SK-N-SH (cell line): ENCODE measurements at regions of chr1 and their contacts with region 1.

Region 1: GRCh38 chr1:19651141-19651737 is 7.1 kb downstream of the NBL1 start:
- DNase-seq: peak; percentile 90
- H3K4me3 ChIP-seq: peak overlapping the region in 1 of 2 experiments; percentile 39; a peak in 1 of 4 replicates
- H3K27ac ChIP-seq: peak overlapping the region in 1 of 2 experiments; percentile 54; a peak in 2 of 4 replicates
- H3K4me1 ChIP-seq: peaks cover 0 to 35% of the 10 kb centered on the region in 2 experiments; a peak in 1 of 4 replicates
- H3K27me3 ChIP-seq: no peaks in the 10 kb centered on the region
- CTCF ChIP-seq: peak; percentile 69
- EP300 ChIP-seq: no peak
- RAD21 ChIP-seq: peak; percentile 92

Region 2: DNA sequence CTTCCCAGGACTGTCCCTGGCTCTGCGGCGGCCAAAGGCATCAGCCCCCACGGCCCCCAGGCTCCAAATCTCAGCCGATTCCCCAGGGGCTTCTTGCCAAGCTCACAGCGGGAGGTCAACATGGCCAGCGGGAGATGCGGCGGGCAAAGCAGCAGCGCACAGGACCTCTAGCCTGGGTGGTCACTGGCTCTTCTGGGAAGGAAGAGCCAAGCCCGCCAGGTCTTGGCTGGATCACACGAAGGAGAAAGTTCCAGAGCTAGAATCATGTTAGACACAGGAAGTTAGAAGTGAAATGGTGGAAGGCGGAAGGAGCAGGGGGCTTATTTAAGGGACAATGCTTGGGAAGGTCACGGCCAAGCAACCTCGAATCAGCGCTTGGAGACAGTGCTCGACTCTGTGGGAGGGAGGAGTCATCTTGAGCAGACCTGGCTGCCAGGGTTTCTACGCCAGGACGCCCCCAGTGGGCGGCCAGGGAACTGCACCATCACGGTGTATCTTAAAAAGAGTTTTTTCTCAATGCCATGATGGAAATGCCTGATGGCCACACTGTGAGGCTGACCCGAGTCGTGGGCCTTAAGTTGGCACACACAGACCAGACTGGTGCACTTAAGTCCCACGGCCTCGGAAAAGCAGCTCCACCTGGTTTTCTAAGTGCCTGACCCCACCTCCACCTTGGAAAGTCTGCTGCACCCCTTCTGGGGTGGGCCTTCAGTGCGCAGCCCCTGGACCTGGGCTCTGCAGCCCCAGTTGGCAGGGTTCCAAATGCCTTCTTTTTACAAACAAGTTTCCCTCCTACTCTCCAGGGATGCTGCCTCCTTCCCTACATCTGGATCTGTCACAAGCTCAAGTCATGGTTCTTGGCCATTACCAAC is 309.8 kb before region 1 on chr1:
- CTCF ChIA-PET with region 1: interaction called, 235 read pairs
- POLR2A ChIA-PET with region 1: no interaction called
- DNase-seq: peak; percentile 89
- H3K4me3 ChIP-seq: no peak overlapping the region; a peak in 1 of 4 replicates
- H3K27ac ChIP-seq: peak overlapping the region in 1 of 2 experiments; percentile 85; a peak in 2 of 4 replicates
- H3K4me1 ChIP-seq: peaks cover 0 to 70% of the 10 kb centered on the region in 2 experiments; a peak in 2 of 4 replicates
- H3K27me3 ChIP-seq: no peaks in the 10 kb centered on the region
- CTCF ChIP-seq: peak; percentile 87
- EP300 ChIP-seq: no peak
- RAD21 ChIP-seq: peak; percentile 57

Region 3: DNA sequence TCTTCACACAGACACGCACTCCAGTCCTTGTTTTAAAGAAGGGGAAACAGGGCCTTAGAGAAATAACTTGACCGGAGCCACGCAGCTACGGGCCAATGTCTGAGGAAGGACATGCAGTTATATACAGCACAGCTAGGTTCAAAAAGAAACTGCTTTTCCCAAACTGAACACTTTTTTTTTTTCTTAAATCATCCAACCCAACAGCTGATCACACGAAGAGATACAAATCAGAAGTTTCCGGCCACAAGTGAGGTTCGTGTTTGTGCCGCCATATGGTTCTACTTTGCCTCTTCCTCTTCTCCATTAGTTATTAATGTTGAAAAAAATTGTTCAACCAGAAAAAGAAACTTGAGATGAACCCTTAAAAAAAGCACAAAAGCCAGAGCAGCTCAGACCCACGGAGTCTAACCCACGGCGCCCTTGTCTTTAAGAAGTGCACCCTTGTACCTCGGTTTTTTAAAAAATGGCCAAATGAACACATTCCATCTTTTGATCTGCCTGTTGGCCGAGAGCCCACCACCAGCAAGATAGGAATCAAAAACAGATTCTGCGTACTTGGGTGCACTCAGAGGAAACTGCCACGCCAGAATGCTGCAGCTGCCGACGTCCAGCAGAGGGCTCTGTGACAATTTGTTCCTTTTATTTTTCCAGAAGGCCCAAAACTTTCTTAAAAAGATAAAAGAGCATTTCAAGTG is 260.2 kb before region 1 on chr1:
- CTCF ChIA-PET with region 1: interaction called, 33 read pairs
- POLR2A ChIA-PET with region 1: no interaction called
- DNase-seq: peak; percentile 85
- H3K4me3 ChIP-seq: peak overlapping the region; percentile 33 to 56
- H3K27ac ChIP-seq: peak overlapping the region; percentile 80 to 97
- H3K4me1 ChIP-seq: peaks cover 37 to 70% of the 10 kb centered on the region in 2 experiments
- H3K27me3 ChIP-seq: no peaks in the 10 kb centered on the region
- CTCF ChIP-seq: peak; percentile 98
- EP300 ChIP-seq: peak; percentile 76 to 84
- RAD21 ChIP-seq: peak; percentile 77

Region 4: GRCh38 chr1:19448491-19449439 is 202.5 kb before region 1 on chr1:
- CTCF ChIA-PET with region 1: interaction called, 50 read pairs
- POLR2A ChIA-PET with region 1: interaction called, 3 read pairs
- DNase-seq: peak; percentile 89
- H3K4me3 ChIP-seq: peak overlapping the region; percentile 22 to 48
- H3K27ac ChIP-seq: peak overlapping the region; percentile 96 to 99
- H3K4me1 ChIP-seq: peaks cover 55 to 82% of the 10 kb centered on the region in 2 experiments
- H3K27me3 ChIP-seq: no peaks in the 10 kb centered on the region
- CTCF ChIP-seq: no peak
- EP300 ChIP-seq: peak; percentile 74 to 92; a peak in 3 of 4 replicates
- RAD21 ChIP-seq: no peak

Region 5: DNA sequence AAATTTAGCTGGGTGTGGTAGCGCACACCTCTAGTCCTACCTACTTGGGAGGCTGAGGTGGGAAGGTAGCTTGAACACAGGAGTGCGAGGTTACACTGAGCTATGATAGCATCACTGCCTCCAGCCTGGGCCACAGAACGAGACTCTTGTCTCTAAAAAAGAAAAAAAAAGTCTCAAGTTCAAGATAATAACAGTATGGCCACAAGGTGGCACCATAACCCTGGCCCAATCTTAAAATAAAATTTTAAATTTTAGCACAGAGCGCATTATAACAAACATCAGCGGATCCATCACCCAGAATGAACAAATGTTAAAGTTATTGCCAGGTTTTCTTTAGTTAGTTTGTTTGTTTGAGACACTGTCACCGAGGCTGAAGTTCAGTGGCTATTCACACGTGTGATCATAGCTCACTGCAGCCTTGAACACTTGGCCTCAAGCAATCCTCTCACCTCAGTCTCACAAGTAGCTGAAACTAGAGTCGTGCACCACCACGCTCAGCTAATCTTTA is 10.5 kb after region 1 on chr1:
- CTCF ChIA-PET with region 1: interaction called, 22 read pairs
- POLR2A ChIA-PET with region 1: no interaction called
- DNase-seq: no peak
- H3K4me3 ChIP-seq: no peak overlapping the region
- H3K27ac ChIP-seq: no peak overlapping the region
- H3K4me1 ChIP-seq: peaks cover 0 to 6% of the 10 kb centered on the region in 2 experiments; a peak in 1 of 4 replicates
- H3K27me3 ChIP-seq: no peaks in the 10 kb centered on the region; the same call in 1 of the 2 replicates
- CTCF ChIP-seq: peak; percentile 83
- EP300 ChIP-seq: no peak
- RAD21 ChIP-seq: peak; percentile 75